Naive thymus-derived CD4-positive, alpha-beta T cell (primary cell): ENCODE measurements at regions of chr22 and their contacts with region 1.

Region 1: DNA sequence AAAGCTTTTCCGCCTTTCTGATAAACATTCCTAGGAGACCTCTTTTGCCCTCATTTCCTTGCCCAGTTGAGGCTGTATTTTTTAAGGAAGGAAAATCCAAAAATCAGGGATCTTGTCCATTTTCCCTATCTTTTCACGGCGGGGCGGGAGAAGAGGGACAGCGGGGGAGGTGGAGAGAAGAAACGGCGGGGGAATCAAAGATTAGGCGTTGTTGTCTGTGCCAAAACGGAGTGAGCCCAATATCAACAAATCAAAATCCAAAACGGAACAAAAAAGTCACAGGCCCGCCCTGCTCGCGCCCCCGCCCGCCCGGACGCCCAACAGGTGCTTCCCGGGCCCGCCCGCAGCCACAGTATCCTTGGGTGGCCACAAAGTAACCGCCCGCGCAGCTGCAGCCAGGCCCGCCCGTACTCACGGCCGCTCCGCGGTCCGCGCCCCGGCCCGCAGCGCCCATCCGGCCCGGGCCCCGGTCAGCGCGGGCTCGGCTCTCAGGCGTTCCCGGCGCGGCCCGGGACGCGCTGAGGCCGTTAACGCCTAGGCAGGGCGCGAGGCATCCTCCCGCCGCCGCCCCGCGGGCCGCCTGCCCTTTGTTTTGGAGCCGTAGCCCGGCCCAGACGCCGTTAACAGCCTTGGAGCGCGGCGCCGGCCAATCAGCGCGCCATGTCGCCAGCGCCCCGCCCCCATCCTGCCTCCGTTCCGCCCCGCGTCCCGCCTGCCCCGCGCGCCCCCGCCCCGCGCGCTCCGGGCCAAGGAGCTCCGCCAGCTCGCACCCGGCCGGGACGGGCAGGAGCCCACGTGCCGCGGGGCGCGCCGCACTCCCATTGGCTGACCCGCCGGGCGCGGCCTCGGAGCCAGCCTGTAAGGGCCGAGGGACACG is at the start of gene YPEL1:
- DNase-seq: peak; percentile 94 to 99 (median 97)
- ATAC-seq: peak; percentile 96
- H3K4me3 ChIP-seq: peak within 1 kb of the TSS; percentile 51
- H3K4me3 Mint-ChIP-seq: peak within 1 kb of the TSS; percentile 86 to 96 (median 92)
- H3K27ac ChIP-seq: peak within 1 kb of the TSS; percentile 66
- H3K27ac Mint-ChIP-seq: peak within 1 kb of the TSS; percentile 67 to 91 (median 85)
- H3K4me1 ChIP-seq: peaks cover 0 to 7% of the 10 kb centered on the region in 2 donors
- H3K4me1 Mint-ChIP-seq: peaks cover 13 to 26% (median 15%) of the 10 kb centered on the region in 7 donors
- H3K27me3 ChIP-seq: no peaks in the 10 kb centered on the region
- H3K27me3 Mint-ChIP-seq: peaks cover 0 to 22% (median 0%) of the 10 kb centered on the region in 5 donors
- total RNA-seq, gene YPEL1: 2.5 to 9.5 (median 3.6) TPM

Region 2: GRCh38 chr22:20858615-20859416 is 876.6 kb before region 1 on chr22 and contains the starts of genes PI4KA and SNAP29:
- CTCF ChIA-PET with region 1: no interaction called
- POLR2A ChIA-PET with region 1: interaction called, 3 read pairs
- intact Hi-C with region 1: loop called in 1 of 2 experiments (anchors 5 kb)
- DNase-seq: peak; percentile 92 to 98 (median 96)
- ATAC-seq: peak; percentile 97
- H3K4me3 ChIP-seq: peak within 1 kb of the TSS; percentile 78
- H3K4me3 Mint-ChIP-seq: peak within 1 kb of the TSS; percentile 87 to 95 (median 92)
- H3K27ac ChIP-seq: peak within 1 kb of the TSS; percentile 87
- H3K27ac Mint-ChIP-seq: peak within 1 kb of the TSS; percentile 60 to 92 (median 88)
- H3K4me1 ChIP-seq: peaks cover 17 to 20% of the 10 kb centered on the region in 2 donors
- H3K4me1 Mint-ChIP-seq: peaks cover 38 to 76% (median 58%) of the 10 kb centered on the region in 7 donors
- H3K27me3 ChIP-seq: no peaks in the 10 kb centered on the region
- H3K27me3 Mint-ChIP-seq: no peaks in the 10 kb centered on the region
- total RNA-seq, gene PI4KA: 120 to 181 (median 168) TPM
- total RNA-seq, gene SNAP29: 15.2 to 32.8 (median 25.4) TPM

Region 3: GRCh38 chr22:21712894-21713712 is 22.3 kb before region 1 on chr22:
- CTCF ChIA-PET with region 1: no interaction called
- POLR2A ChIA-PET with region 1: no interaction called
- intact Hi-C with region 1: loop called in 1 of 2 experiments (anchors 2 kb)
- DNase-seq: peak; percentile 22 to 61 (median 44)
- ATAC-seq: peak; percentile 92
- H3K4me3 ChIP-seq: no peak overlapping the region
- H3K4me3 Mint-ChIP-seq: peak overlapping the region in 5 of 10 donors; percentile 39 to 66 (median 50)
- H3K27ac ChIP-seq: no peak overlapping the region
- H3K27ac Mint-ChIP-seq: no peak overlapping the region
- H3K4me1 ChIP-seq: peaks cover 0 to 4% of the 10 kb centered on the region in 2 donors
- H3K4me1 Mint-ChIP-seq: peaks cover 0 to 6% (median 5%) of the 10 kb centered on the region in 7 donors
- H3K27me3 ChIP-seq: no peaks in the 10 kb centered on the region
- H3K27me3 Mint-ChIP-seq: no peaks in the 10 kb centered on the region

Region 4: GRCh38 chr22:21816787-21817496 is 81.5 kb after region 1 on chr22:
- CTCF ChIA-PET with region 1: no interaction called
- POLR2A ChIA-PET with region 1: no interaction called
- intact Hi-C with region 1: loop called in 1 of 2 experiments (anchors 1 kb)
- DNase-seq: peak in 8 of 9 donors; percentile 16 to 83 (median 74)
- ATAC-seq: peak; percentile 95
- H3K4me3 ChIP-seq: peak overlapping the region; percentile 0
- H3K4me3 Mint-ChIP-seq: peak overlapping the region; percentile 73 to 86 (median 76)
- H3K27ac ChIP-seq: peak overlapping the region; percentile 68
- H3K27ac Mint-ChIP-seq: peak overlapping the region; percentile 92 to 98 (median 97)
- H3K4me1 ChIP-seq: peaks cover 39 to 40% of the 10 kb centered on the region in 2 donors
- H3K4me1 Mint-ChIP-seq: peaks cover 44 to 82% (median 65%) of the 10 kb centered on the region in 7 donors
- H3K27me3 ChIP-seq: no peaks in the 10 kb centered on the region
- H3K27me3 Mint-ChIP-seq: no peaks in the 10 kb centered on the region

Region 5: GRCh38 chr22:21938071-21938822 is 202.8 kb after region 1 on chr22:
- CTCF ChIA-PET with region 1: interaction called, 3 read pairs
- POLR2A ChIA-PET with region 1: no interaction called
- intact Hi-C with region 1: loop called in 1 of 2 experiments (anchors 5 kb)
- DNase-seq: peak; percentile 76 to 95 (median 87)
- ATAC-seq: peak; percentile 94
- H3K4me3 ChIP-seq: peak overlapping the region; percentile 69
- H3K4me3 Mint-ChIP-seq: peak overlapping the region; percentile 72 to 84 (median 80)
- H3K27ac ChIP-seq: peak overlapping the region; percentile 60
- H3K27ac Mint-ChIP-seq: peak overlapping the region; percentile 33 to 90 (median 81)
- H3K4me1 ChIP-seq: peaks cover 12 to 13% of the 10 kb centered on the region in 2 donors
- H3K4me1 Mint-ChIP-seq: peaks cover 20 to 55% (median 48%) of the 10 kb centered on the region in 7 donors
- H3K27me3 ChIP-seq: no peaks in the 10 kb centered on the region
- H3K27me3 Mint-ChIP-seq: no peaks in the 10 kb centered on the region

Region 6: GRCh38 chr22:22207845-22208564 is 472.6 kb after region 1 on chr22:
- CTCF ChIA-PET with region 1: no interaction called
- POLR2A ChIA-PET with region 1: no interaction called
- intact Hi-C with region 1: no loop called
- DNase-seq: peak; percentile 37 to 87 (median 63)
- ATAC-seq: peak; percentile 90
- H3K4me3 ChIP-seq: no peak overlapping the region
- H3K4me3 Mint-ChIP-seq: peak overlapping the region in 6 of 10 donors; percentile 3 to 64 (median 50)
- H3K27ac ChIP-seq: no peak overlapping the region
- H3K27ac Mint-ChIP-seq: peak overlapping the region in 8 of 9 donors; percentile 11 to 75 (median 38)
- H3K4me1 ChIP-seq: peaks cover 4 to 9% of the 10 kb centered on the region in 2 donors
- H3K4me1 Mint-ChIP-seq: peaks cover 9 to 35% (median 28%) of the 10 kb centered on the region in 7 donors
- H3K27me3 ChIP-seq: no peaks in the 10 kb centered on the region
- H3K27me3 Mint-ChIP-seq: peaks cover 0 to 4% (median 0%) of the 10 kb centered on the region in 5 donors

Region 7: DNA sequence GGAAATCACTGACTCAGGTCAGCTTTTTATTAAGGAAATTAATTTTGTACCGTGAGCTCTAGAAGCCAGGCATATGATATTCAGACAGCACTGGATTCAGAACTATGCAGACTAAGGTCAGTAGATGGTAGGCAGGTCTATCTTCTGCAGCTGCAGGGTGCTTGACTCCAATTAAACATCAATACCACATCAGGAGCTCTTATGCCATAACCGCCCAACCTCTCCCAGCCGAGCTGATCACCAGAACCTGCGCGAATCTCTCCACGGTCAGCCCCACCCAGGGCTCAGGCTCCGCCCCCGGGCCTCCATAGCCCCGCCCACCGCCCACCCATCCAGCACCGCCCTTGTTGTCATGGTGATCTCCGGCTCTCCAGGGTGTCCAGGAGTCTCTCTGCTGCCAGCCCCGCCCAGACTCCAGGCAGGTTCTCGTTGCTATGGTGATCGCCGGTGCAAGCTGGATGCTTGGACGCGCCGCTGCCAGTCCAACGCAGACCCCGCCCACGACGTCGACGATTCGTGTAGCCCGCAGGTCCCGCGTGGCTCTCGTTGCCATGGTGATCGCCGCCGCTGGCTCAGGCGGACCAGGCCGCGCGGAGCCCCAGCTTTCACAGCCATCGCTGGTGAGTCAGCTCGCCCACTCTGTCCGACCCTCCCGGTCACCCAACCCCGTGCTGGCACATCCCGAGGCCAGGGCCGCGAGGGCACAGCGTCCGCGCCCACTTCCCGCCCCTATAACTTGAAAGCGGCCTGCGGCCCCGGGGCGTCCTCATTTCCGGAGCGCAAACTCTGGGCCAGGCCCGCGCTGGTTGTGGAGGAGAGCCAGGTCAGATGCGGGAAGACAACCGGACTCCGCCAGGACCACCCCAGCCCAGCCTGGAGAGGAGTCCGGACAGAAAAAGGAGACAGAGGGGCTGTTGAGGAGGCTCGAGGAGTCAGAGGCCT is 1409.8 kb after region 1 on chr22 and contains the start of gene RAB36:
- CTCF ChIA-PET with region 1: no interaction called
- POLR2A ChIA-PET with region 1: no interaction called
- intact Hi-C with region 1: loop called in 1 of 2 experiments (anchors 5 kb)
- DNase-seq: peak; percentile 77 to 93 (median 81)
- ATAC-seq: peak; percentile 78
- H3K4me3 ChIP-seq: peak within 1 kb of the TSS; percentile 25
- H3K4me3 Mint-ChIP-seq: peak within 1 kb of the TSS; percentile 72 to 84 (median 82)
- H3K27ac ChIP-seq: peak within 1 kb of the TSS; percentile 78
- H3K27ac Mint-ChIP-seq: peak within 1 kb of the TSS; percentile 79 to 96 (median 93)
- H3K4me1 ChIP-seq: peaks cover 38 to 45% of the 10 kb centered on the region in 2 donors
- H3K4me1 Mint-ChIP-seq: peaks cover 27 to 60% (median 49%) of the 10 kb centered on the region in 7 donors
- H3K27me3 ChIP-seq: no peaks in the 10 kb centered on the region
- H3K27me3 Mint-ChIP-seq: peaks cover 0 to 20% (median 0%) of the 10 kb centered on the region in 5 donors
- total RNA-seq, gene RAB36: 0.10 to 1.2 (median 0.38) TPM